ENCODE measurements at regions of chr11 and their contacts with region 1.

Region 1: DNA sequence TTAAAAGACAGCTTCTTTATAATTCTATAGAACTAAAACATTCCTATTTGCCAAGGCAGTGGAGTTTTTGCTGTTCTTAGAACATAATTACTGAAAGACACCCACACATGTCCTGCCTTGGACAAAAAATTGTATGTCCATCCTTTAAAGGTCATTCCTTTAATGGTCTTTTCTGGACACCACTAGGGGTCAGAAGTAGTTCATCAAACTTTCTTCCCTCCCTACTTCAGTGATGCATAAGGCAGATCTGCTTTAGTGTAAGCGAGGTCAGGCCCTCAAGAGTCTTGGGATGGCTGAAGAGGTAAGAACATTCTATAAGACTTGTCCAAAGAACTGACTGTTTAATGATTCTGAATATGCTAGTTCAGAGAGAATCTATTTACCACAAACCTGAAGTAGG is 4.3 kb upstream of the OR51V1 start:
- DNase-seq: peak; percentile 90
- ATAC-seq: peak; percentile 94
- H3K4me3 ChIP-seq: no peak overlapping the region
- H3K27ac ChIP-seq: no peak overlapping the region
- H3K4me1 ChIP-seq: peaks cover 4% of the 10 kb centered on the region; the same call in 1 of the 2 replicates
- H3K27me3 ChIP-seq: no peaks in the 10 kb centered on the region
- CTCF ChIP-seq: peak; percentile 82
- POLR2A ChIP-seq: no peak
- RAD21 ChIP-seq: peak; percentile 91

Region 2: GRCh38 chr11:4560467-4560866 is 644.3 kb before region 1 on chr11:
- CTCF ChIA-PET with region 1: no interaction called
- POLR2A ChIA-PET with region 1: no interaction called
- dilution Hi-C with region 1: no loop called
- in situ Hi-C with region 1: no loop called
- intact Hi-C with region 1: no loop called
- DNase-seq: no peak
- ATAC-seq: no peak
- H3K4me3 ChIP-seq: no peak overlapping the region
- H3K27ac ChIP-seq: no peak overlapping the region
- H3K4me1 ChIP-seq: no peaks in the 10 kb centered on the region
- H3K27me3 ChIP-seq: no peaks in the 10 kb centered on the region
- CTCF ChIP-seq: no peak
- POLR2A ChIP-seq: no peak
- RAD21 ChIP-seq: no peak

Region 3: GRCh38 chr11:5123802-5124521 is 80.8 kb before region 1 on chr11:
- CTCF ChIA-PET with region 1: interaction called, 3 read pairs
- POLR2A ChIA-PET with region 1: no interaction called
- dilution Hi-C with region 1: no loop called
- in situ Hi-C with region 1: loop called (anchors 10 kb)
- intact Hi-C with region 1: loop called (anchors 1 kb)
- DNase-seq: peak; percentile 76
- ATAC-seq: peak; percentile 100
- H3K4me3 ChIP-seq: no peak overlapping the region
- H3K27ac ChIP-seq: no peak overlapping the region
- H3K4me1 ChIP-seq: no peaks in the 10 kb centered on the region
- H3K27me3 ChIP-seq: no peaks in the 10 kb centered on the region
- CTCF ChIP-seq: peak; percentile 94
- POLR2A ChIP-seq: no peak
- RAD21 ChIP-seq: peak; percentile 91

Region 4: GRCh38 chr11:5291207-5291838 is 86.5 kb after region 1 on chr11:
- CTCF ChIA-PET with region 1: interaction called, 4 read pairs
- POLR2A ChIA-PET with region 1: no interaction called
- dilution Hi-C with region 1: no loop called
- in situ Hi-C with region 1: no loop called
- intact Hi-C with region 1: loop called (anchors 1 kb)
- DNase-seq: peak; percentile 68
- ATAC-seq: peak; percentile 36; the same call in 1 of the 2 replicates
- H3K4me3 ChIP-seq: no peak overlapping the region
- H3K27ac ChIP-seq: no peak overlapping the region
- H3K4me1 ChIP-seq: peaks cover 10% of the 10 kb centered on the region; the same call in 1 of the 2 replicates
- H3K27me3 ChIP-seq: no peaks in the 10 kb centered on the region
- CTCF ChIP-seq: peak; percentile 63
- POLR2A ChIP-seq: no peak
- RAD21 ChIP-seq: peak; percentile 74

Region 5: GRCh38 chr11:5550440-5551095 is 345.8 kb after region 1 on chr11:
- CTCF ChIA-PET with region 1: no interaction called
- POLR2A ChIA-PET with region 1: no interaction called
- dilution Hi-C with region 1: no loop called
- in situ Hi-C with region 1: no loop called
- intact Hi-C with region 1: no loop called
- DNase-seq: peak; percentile 91
- ATAC-seq: peak; percentile 72
- H3K4me3 ChIP-seq: no peak overlapping the region
- H3K27ac ChIP-seq: no peak overlapping the region
- H3K4me1 ChIP-seq: no peaks in the 10 kb centered on the region
- H3K27me3 ChIP-seq: no peaks in the 10 kb centered on the region
- CTCF ChIP-seq: no peak
- POLR2A ChIP-seq: no peak
- RAD21 ChIP-seq: no peak